HCT116 (cell line): ENCODE measurements at regions of chr2 and their contacts with region 1.

Region 1: GRCh38 chr2:138787053-138787666 is 7.0 kb upstream of the NXPH2 start:
- DNase-seq: peak; percentile 31
- ATAC-seq: peak; percentile 69; the same call in 1 of the 2 replicates
- H3K4me3 ChIP-seq: no peak overlapping the region
- H3K27ac ChIP-seq: no peak overlapping the region
- H3K4me1 ChIP-seq: no peaks in the 10 kb centered on the region
- H3K27me3 ChIP-seq: no peaks in the 10 kb centered on the region
- CTCF ChIP-seq: peak; percentile 68 to 86 (median 72)
- POLR2A ChIP-seq: no peak
- RAD21 ChIP-seq: peak; percentile 83

Region 2: DNA sequence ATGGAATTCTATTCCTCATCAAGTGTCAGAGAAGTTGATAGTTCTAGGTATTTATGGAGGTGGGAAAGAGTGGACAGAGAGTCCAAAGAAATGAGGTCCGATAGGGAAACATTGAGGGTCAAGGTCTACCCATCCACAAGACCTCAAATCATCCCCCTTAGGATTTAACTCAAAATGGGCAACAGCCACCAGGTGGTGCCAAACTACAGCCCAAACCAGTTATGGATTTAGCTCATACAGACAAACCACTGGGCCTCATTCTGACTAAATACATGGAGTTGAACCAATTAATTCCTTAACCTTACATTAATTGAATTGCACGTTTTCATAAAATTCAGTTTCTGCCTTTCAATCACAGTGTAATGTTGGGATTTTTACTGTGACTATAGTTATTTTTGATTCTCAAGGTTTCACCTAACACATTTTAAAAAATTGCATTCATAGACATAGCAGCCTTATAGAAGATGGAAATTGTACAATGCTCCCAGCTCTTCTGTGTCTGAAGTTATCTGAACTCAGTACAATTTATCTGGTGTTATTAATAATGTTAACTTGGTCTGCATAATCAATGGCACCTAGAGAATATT is 921.1 kb before region 1 on chr2:
- CTCF ChIA-PET with region 1: interaction called, 14 read pairs
- POLR2A ChIA-PET with region 1: no interaction called
- RAD21 ChIA-PET with region 1: no interaction called
- intact Hi-C with region 1: no loop called
- DNase-seq: peak; percentile 53
- ATAC-seq: peak; percentile 91
- H3K4me3 ChIP-seq: no peak overlapping the region
- H3K27ac ChIP-seq: no peak overlapping the region
- H3K4me1 ChIP-seq: no peaks in the 10 kb centered on the region
- H3K27me3 ChIP-seq: no peaks in the 10 kb centered on the region
- CTCF ChIP-seq: peak; percentile 62 to 81 (median 77); a peak in 5 of 6 replicates
- POLR2A ChIP-seq: no peak
- RAD21 ChIP-seq: peak; percentile 82

Region 3: GRCh38 chr2:137888845-137889244 is 898.3 kb before region 1 on chr2:
- CTCF ChIA-PET with region 1: interaction called, 10 read pairs
- POLR2A ChIA-PET with region 1: no interaction called
- RAD21 ChIA-PET with region 1: no interaction called
- intact Hi-C with region 1: no loop called
- DNase-seq: peak; percentile 10
- ATAC-seq: peak; percentile 69
- H3K4me3 ChIP-seq: no peak overlapping the region
- H3K27ac ChIP-seq: no peak overlapping the region
- H3K4me1 ChIP-seq: peaks cover 0 to 4% of the 10 kb centered on the region in 2 experiments; a peak in 1 of 4 replicates
- H3K27me3 ChIP-seq: no peaks in the 10 kb centered on the region
- CTCF ChIP-seq: peak; percentile 45 to 74 (median 68); a peak in 5 of 6 replicates
- POLR2A ChIP-seq: no peak
- RAD21 ChIP-seq: peak; percentile 63

Region 4: DNA sequence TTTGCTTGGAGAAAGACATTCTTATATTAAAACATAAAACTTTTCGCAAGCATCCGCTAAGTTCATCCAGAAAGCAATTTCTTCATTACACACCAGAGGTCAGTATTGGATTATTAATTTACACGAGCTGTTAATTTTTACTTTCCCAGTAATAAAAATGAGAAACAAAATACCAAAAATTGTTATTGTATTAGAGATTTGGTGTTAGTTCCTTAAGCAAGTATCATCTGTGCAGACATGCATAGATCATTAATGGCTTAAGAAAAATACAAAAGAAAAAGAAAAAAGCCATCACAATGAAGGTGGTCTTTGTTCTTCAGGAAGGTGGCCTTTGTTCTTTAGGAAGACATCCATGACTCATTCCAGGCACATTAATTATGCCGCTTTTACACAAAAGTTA is 876.5 kb before region 1 on chr2:
- CTCF ChIA-PET with region 1: interaction called, 23 read pairs
- POLR2A ChIA-PET with region 1: no interaction called
- RAD21 ChIA-PET with region 1: interaction called in 1 of 2 experiments, 3 read pairs
- intact Hi-C with region 1: loop called (anchors 2 kb)
- DNase-seq: peak; percentile 8
- ATAC-seq: no peak
- H3K4me3 ChIP-seq: no peak overlapping the region
- H3K27ac ChIP-seq: no peak overlapping the region
- H3K4me1 ChIP-seq: no peaks in the 10 kb centered on the region
- H3K27me3 ChIP-seq: no peaks in the 10 kb centered on the region
- CTCF ChIP-seq: peak; percentile 34 to 73 (median 67); a peak in 4 of 6 replicates
- POLR2A ChIP-seq: no peak
- RAD21 ChIP-seq: peak; percentile 78

Region 5: DNA sequence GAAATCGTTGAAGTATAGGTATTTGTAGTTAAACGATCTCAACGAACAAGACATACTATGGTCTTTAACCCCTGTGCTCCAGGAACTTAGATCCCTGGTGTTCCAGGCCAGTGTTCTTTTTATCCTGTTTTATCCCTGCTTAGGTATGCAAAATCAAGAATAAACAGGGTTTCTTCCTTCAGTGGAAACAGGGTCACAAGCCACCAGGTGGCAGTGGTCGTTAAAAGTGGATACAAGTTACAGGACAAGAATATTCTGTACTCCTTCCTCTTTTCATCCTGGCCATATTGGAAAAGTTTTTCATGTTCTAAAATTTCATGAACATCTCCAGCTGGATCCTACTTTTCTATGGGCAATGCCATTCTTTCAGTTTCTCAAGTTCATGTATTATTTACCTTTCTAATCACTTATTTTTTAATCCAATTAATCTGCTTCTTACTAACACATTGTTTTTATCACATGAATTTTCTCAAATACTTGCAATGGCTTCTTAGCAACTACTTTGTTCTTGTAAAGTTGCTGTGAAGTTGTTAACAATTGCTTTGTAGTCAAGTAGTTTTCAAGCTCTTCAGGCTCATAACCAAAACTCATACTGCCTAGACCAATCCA is 839.3 kb before region 1 on chr2:
- CTCF ChIA-PET with region 1: interaction called, 5 read pairs
- POLR2A ChIA-PET with region 1: no interaction called
- RAD21 ChIA-PET with region 1: no interaction called
- intact Hi-C with region 1: loop called (anchors 2 kb)
- DNase-seq: peak; percentile 59
- ATAC-seq: peak; percentile 88
- H3K4me3 ChIP-seq: no peak overlapping the region
- H3K27ac ChIP-seq: no peak overlapping the region
- H3K4me1 ChIP-seq: peaks cover 0 to 3% of the 10 kb centered on the region in 2 experiments; a peak in 1 of 4 replicates
- H3K27me3 ChIP-seq: no peaks in the 10 kb centered on the region
- CTCF ChIP-seq: peak; percentile 68 to 82 (median 79); a peak in 5 of 6 replicates
- POLR2A ChIP-seq: no peak
- RAD21 ChIP-seq: peak; percentile 83

Region 6: DNA sequence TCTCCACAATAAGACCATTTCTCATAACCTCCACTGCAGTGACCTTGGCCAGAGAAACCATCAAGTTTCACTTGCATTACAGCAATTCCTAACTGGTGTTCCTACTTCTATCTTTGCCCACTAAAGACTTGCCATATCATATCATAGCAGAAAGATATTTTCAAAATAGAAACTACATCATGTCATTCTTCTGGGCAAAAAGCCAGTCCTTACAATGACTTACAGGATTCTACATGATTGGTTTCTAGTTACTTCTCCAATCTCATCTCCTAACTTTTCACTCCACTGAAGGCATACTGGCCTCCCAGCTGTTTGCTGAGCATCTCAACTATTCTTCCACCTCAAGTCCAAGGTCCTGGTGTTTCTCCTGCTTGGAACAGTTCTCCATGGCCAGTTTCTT is 671.5 kb before region 1 on chr2:
- CTCF ChIA-PET with region 1: no interaction called
- POLR2A ChIA-PET with region 1: no interaction called
- RAD21 ChIA-PET with region 1: no interaction called
- intact Hi-C with region 1: loop called (anchors 10 kb)
- DNase-seq: no peak
- ATAC-seq: no peak
- H3K4me3 ChIP-seq: no peak overlapping the region
- H3K27ac ChIP-seq: no peak overlapping the region
- H3K4me1 ChIP-seq: no peaks in the 10 kb centered on the region
- H3K27me3 ChIP-seq: no peaks in the 10 kb centered on the region
- CTCF ChIP-seq: no peak
- POLR2A ChIP-seq: no peak
- RAD21 ChIP-seq: no peak

Region 7: GRCh38 chr2:138727956-138728355 is 59.2 kb before region 1 on chr2:
- CTCF ChIA-PET with region 1: interaction called, 18 read pairs
- POLR2A ChIA-PET with region 1: no interaction called
- RAD21 ChIA-PET with region 1: no interaction called
- intact Hi-C with region 1: loop called (anchors 1 kb)
- DNase-seq: peak; percentile 7
- ATAC-seq: peak; percentile 67
- H3K4me3 ChIP-seq: no peak overlapping the region
- H3K27ac ChIP-seq: no peak overlapping the region
- H3K4me1 ChIP-seq: no peaks in the 10 kb centered on the region
- H3K27me3 ChIP-seq: no peaks in the 10 kb centered on the region
- CTCF ChIP-seq: peak; percentile 10 to 51 (median 35); a peak in 2 of 6 replicates
- POLR2A ChIP-seq: no peak
- RAD21 ChIP-seq: peak; percentile 70